ENCODE measurements at regions of chr2 and their contacts with region 1.

Region 1: DNA sequence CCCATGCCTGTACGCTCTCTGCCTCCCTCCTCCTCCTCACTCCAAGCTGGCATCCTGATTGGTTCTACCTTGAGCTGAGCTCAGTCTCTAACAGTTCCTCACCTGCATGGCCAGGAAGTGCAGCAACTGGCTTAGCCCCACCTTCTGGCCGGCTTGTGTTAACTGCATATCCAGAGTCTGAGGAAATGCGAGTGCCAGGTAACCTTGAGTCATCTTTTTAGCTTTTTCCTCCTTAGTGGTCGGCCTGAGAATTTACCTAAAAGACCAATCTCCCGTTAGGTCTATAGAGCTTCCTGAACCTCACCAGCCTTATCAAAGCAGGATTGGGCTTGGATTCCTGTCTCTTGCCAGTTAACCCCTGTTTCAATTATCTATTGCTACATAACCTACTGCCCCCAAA is 89.5 kb upstream of the STK39 start:
- DNase-seq: peak; percentile 72 to 77 (median 75)
- ATAC-seq: peak; percentile 99
- H3K4me3 ChIP-seq: no peak overlapping the region
- H3K4me1 ChIP-seq: no peaks in the 10 kb centered on the region
- CTCF ChIP-seq: no peak

Region 2: DNA sequence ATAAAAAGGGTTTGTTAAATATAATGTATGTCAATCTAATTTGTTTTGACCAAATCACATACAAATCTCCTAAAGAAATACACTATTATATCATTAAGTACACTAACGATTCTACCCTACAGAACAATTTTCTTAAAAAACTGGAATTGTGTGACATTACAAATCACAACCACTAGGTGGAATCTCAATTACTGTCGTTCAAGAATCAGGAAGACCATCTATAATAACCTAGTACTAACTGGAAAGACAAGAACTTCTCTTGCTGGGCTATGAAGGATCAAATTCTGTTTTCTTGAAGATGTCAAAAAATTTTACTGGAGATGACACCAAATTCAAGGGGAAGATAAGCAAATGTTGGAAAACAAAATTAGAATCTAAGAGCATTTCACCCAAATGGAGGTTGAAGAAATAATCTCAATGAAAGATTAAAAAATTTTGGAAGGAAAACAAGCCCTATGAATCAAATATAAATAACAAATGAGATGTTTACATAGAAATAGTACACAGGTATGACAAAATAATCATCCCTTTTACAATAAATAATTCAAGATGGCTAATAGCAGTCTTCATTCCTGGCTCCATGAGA is 200.4 kb before region 1 on chr2:
- intact Hi-C with region 1: loop called in 1 of 2 experiments (anchors 10 kb)
- DNase-seq: no peak
- ATAC-seq: peak; percentile 69
- H3K4me3 ChIP-seq: no peak overlapping the region
- H3K4me1 ChIP-seq: no peaks in the 10 kb centered on the region
- CTCF ChIP-seq: peak; percentile 24

Region 3: DNA sequence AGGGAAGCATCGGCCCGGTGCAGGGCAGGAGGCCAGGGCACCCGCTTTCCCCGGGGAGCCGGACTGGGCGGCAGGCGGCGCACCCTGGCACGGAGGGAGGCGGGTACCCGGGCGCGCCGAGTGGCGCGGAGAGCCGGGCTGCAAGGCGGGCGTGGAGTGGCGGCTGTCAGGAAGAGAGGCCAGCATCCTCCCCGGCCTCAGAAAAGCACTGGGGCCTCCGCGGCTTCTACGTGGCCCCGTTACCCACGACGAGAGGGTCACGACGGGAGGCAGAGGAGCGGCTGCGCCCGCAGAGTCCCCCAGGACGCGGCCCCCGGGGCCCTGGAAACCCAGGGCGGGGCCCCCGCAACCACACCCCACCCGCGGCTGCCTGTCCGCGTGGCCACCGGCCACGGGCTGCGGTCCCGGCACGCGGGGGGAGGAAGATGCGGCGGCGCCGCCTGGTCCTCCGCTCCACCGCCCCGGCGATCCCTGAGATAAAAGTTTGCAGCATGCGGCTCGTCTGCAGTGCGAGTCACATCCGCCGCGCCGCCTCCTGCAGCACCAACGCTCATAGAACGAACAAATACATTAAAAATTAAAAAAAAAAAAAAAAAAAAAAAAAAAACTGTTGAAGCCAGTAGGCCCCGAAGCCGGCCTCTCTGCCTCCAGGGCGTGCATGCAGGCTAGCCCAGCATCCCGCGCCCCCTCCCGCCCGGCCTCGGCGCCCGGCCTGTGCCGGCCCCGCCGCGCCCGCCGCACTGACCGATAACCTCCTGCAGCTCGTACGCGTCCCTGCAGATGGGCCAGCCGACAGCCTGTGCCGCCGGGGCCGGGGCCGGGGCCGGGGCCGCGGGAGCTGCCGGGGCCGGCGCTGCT is 90.2 kb before region 1 on chr2:
- intact Hi-C with region 1: loop called in 1 of 2 experiments (anchors 5 kb)
- DNase-seq: peak; percentile 79 to 89 (median 87)
- ATAC-seq: peak; percentile 82
- H3K4me3 ChIP-seq: peak overlapping the region; percentile 50
- H3K4me1 ChIP-seq: peaks cover 26% of the 10 kb centered on the region
- CTCF ChIP-seq: peak; percentile 17